ENCODE measurements at regions of chr2 and their contacts with region 1.

Region 1: DNA sequence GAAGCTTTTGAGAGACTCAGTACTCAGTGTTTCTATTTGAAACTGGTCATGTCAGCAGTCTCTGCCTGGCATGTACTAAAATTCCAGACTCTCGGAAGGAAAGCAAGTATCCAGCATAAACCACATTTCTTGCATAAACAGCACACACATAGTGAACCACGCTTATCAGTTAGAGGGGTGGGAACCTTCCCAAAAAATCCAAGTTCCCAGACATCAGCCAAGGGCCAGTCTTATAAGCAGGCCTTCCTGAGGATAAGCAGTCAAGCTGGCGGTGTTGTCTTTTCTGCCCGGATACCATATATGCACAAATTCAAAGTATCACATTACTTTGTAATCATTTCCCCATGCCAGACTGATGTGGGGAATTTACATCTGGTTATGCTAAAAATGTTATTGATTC is 73.6 kb downstream of the ST6GAL2 start:
- DNase-seq: peak in 1 of 2 donors; percentile 78
- H3K4me3 ChIP-seq: peak overlapping the region in 1 of 2 donors; percentile 6
- H3K27ac ChIP-seq: peak overlapping the region; percentile 69 to 85
- H3K4me1 ChIP-seq: peaks cover 7 to 56% of the 10 kb centered on the region in 2 donors
- H3K27me3 ChIP-seq: no peaks in the 10 kb centered on the region
- CTCF ChIP-seq: no peak

Region 2: GRCh38 chr2:106839849-106840581 is 27.6 kb after region 1 on chr2:
- intact Hi-C with region 1: no loop called
- DNase-seq: no peak
- H3K4me3 ChIP-seq: no peak overlapping the region
- H3K27ac ChIP-seq: peak overlapping the region; percentile 75 to 78
- H3K4me1 ChIP-seq: peaks cover 23 to 41% of the 10 kb centered on the region in 2 donors
- H3K27me3 ChIP-seq: no peaks in the 10 kb centered on the region
- CTCF ChIP-seq: peak in 2 of 3 experiments; percentile 20 to 55

Region 3: DNA sequence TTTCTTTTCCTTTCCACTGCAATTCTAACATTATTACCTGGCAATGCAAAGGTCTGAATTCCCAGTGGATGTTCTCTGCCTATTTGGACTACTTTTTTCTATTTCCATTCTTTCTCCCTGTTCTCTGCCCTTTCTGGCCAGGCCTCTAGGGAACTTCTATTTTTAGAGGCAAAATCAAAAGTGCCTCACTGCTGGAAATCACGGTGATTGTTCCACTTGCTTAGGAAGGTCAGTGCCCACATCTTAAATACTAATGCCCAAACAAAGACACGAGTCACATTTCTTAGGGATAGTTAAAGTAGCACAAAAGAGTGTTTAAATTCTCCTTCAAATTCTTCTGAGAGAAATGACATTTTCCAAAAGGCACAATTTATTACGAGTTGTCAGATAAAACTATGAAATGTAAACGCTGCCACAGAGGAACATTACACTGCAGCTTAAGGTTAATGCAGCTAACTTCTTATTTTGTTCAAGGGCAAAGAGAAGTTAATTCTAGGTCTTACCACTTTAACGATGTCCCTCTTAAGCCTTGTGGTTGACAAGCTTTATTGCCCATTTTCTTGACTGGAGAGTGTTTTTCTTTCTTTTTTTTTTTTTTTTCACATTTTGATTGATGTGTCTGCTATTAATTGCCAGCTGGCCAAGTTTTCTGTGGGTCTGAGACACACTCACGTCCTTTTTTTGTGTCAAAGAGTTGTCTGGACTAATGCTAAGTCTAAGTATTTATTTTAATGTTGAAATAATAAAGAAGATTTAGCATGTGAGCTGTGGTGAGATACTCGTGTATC is 38.9 kb after region 1 on chr2:
- intact Hi-C with region 1: loop called (anchors 5 kb)
- DNase-seq: no peak
- H3K4me3 ChIP-seq: peak overlapping the region; percentile 22 to 41
- H3K27ac ChIP-seq: peak overlapping the region; percentile 81 to 85
- H3K4me1 ChIP-seq: peaks cover 10 to 73% of the 10 kb centered on the region in 2 donors
- H3K27me3 ChIP-seq: no peaks in the 10 kb centered on the region
- CTCF ChIP-seq: no peak

Region 4: GRCh38 chr2:106996171-106996769 is 183.9 kb after region 1 on chr2:
- intact Hi-C with region 1: loop called (anchors 5 kb)
- DNase-seq: no peak
- H3K4me3 ChIP-seq: peak overlapping the region in 1 of 2 donors; percentile 53
- H3K27ac ChIP-seq: peak overlapping the region in 1 of 2 donors; percentile 68
- H3K4me1 ChIP-seq: peaks cover 6 to 16% of the 10 kb centered on the region in 2 donors
- H3K27me3 ChIP-seq: no peaks in the 10 kb centered on the region
- CTCF ChIP-seq: no peak

Measured in ascending aorta (tissue), 2 donors.